Head of caudate nucleus (tissue), 42 donors: ENCODE measurements at regions of chr6 and their contacts with region 1.

Region 1: GRCh38 chr6:125790358-125791150 is at the start of gene NCOA7:
- DNase-seq: peak; percentile 58 to 96 (median 90)

Region 2: DNA sequence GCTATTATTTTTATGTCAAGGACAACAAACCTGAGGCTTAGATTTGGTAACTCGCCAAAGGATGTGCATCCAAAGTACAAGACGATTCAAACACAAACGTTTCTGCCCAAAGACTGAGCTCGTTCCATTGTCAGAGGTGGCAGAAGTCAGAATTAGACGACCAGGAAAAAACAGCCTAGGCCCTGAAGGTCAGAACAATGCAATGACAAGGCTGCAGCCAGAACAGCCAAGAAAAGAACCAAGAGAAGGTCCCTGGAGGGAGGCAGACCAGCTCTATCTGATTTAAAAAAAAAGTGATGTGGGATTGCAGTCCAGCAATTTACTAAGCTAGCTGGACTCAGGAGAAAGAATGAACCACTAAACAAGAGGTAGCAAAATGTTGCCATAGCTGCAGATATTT is 54.4 kb after region 1 on chr6:
- intact Hi-C with region 1: loop called (anchors 10 kb)
- DNase-seq: no peak

Region 3: DNA sequence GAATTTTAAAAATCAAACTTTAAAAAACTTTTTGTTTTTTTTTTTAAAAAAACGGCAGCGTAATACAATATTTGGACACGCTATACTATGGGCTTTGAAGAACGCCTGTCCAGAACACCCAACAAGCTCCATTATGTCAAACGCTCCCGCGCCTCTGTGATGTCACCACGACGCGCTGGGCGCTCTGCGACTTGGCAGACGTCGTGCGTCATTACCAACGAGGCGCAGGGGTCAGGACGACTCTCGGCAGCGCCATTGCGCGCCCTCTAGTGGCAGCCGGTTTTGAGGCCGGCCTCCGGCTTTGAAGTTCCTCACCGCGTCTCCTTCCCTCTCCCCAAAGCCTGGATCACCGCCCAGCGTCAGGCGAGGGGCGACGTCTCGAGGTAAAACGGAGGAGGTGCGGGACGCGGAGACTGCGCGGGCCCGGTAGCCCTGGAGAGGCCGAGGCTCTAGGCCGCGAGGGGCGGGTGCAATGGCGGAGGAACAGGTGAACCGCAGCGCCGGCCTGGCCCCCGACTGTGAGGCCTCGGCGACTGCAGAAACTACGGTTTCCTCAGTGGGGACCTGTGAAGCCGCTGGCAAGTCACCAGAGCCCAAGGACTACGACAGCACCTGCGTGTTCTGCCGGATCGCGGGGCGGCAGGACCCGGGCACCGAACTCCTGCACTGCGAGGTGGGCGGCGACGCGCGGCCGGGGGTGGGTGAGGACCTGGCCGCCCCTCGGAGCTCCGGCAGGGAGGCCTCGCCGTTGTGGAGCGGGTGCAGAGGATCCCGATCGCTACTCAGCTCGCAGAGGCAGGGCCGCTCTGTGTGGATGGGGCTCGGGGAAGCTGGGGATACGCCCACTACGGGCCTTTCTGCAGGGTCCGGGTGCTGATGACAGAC is 166.2 kb after region 1 on chr6 and contains the start of gene HINT3:
- intact Hi-C with region 1: loop called (anchors 2 kb)
- DNase-seq: peak; percentile 96 to 100 (median 98)